ENCODE measurements at regions of chr17 and their contacts with region 1.

Region 1: GRCh38 chr17:8383143-8383822 is at the start of gene RPL26:
- DNase-seq: peak; percentile 83 to 96 (median 86)
- ATAC-seq: peak; percentile 87
- H3K4me3 ChIP-seq: peak within 1 kb of the TSS; percentile 53
- H3K27ac ChIP-seq: peak within 1 kb of the TSS; percentile 83
- H3K4me1 ChIP-seq: peaks cover 34 to 39% of the 10 kb centered on the region in 2 experiments
- H3K27me3 ChIP-seq: no peaks in the 10 kb centered on the region
- CTCF ChIP-seq: peak; percentile 84 to 93 (median 86)
- EP300 ChIP-seq: no peak
- POLR2A ChIP-seq: no peak; the same call in 1 of the 2 replicates
- RAD21 ChIP-seq: peak; percentile 63 to 66
- polyA plus RNA-seq, gene RPL26: 1,706 to 1,892 TPM

Region 2: GRCh38 chr17:8337802-8338752 is 45.2 kb before region 1 on chr17:
- CTCF ChIA-PET with region 1: no interaction called
- POLR2A ChIA-PET with region 1: interaction called, 3 read pairs
- in situ Hi-C with region 1: no loop called
- intact Hi-C with region 1: loop called (anchors 5 kb)
- DNase-seq: no peak
- ATAC-seq: peak; percentile 72
- H3K4me3 ChIP-seq: no peak overlapping the region
- H3K27ac ChIP-seq: no peak overlapping the region
- H3K4me1 ChIP-seq: peaks cover 4 to 11% of the 10 kb centered on the region in 2 experiments; a peak in 4 of 5 replicates
- H3K27me3 ChIP-seq: no peaks in the 10 kb centered on the region
- CTCF ChIP-seq: no peak
- EP300 ChIP-seq: no peak
- POLR2A ChIP-seq: no peak
- RAD21 ChIP-seq: no peak

Region 3: DNA sequence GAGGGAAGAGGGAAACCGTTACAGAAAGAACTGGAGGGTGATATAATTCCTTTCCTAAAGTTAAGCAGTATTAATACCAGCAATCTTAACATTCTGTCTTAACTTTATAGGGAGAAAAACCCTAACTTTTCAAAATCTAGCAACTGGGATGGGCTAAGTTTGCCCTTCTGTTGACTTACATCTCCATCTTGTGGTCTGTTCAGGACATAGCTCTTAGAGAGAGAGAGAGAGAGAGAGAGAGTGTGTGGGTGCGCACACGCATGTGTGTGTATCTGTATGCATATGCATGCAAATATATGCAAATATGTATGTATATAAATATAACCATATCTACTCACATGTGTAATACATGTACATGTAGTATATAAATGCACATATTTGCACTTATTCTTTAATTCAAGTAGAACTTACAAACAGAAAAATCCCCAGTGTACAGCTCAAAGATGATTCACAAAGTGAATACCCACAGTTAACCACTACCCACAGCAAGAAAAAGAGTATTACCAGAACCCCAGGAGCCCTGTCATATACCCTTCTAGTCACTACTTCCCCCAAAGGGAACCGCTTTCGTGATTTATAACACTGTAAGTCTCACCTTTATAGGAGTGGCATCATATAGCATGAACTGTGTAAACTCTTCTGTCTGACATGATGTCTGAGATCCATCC is 1145.9 kb after region 1 on chr17:
- CTCF ChIA-PET with region 1: no interaction called
- POLR2A ChIA-PET with region 1: no interaction called
- in situ Hi-C with region 1: loop called (anchors 25 kb)
- intact Hi-C with region 1: no loop called
- DNase-seq: peak; percentile 9 to 19 (median 17)
- ATAC-seq: peak; percentile 78
- H3K4me3 ChIP-seq: no peak overlapping the region
- H3K27ac ChIP-seq: no peak overlapping the region
- H3K4me1 ChIP-seq: no peaks in the 10 kb centered on the region
- H3K27me3 ChIP-seq: no peaks in the 10 kb centered on the region; a peak in 1 of 5 replicates
- CTCF ChIP-seq: peak; percentile 33 to 68 (median 49); a peak in 5 of 6 replicates
- EP300 ChIP-seq: no peak
- POLR2A ChIP-seq: no peak
- RAD21 ChIP-seq: peak; percentile 24 to 59; a peak in 2 of 4 replicates

Measured in K562 (cell line).